GM23248 (cell line): ENCODE measurements at regions of chr6 and their contacts with region 1.

Region 1: DNA sequence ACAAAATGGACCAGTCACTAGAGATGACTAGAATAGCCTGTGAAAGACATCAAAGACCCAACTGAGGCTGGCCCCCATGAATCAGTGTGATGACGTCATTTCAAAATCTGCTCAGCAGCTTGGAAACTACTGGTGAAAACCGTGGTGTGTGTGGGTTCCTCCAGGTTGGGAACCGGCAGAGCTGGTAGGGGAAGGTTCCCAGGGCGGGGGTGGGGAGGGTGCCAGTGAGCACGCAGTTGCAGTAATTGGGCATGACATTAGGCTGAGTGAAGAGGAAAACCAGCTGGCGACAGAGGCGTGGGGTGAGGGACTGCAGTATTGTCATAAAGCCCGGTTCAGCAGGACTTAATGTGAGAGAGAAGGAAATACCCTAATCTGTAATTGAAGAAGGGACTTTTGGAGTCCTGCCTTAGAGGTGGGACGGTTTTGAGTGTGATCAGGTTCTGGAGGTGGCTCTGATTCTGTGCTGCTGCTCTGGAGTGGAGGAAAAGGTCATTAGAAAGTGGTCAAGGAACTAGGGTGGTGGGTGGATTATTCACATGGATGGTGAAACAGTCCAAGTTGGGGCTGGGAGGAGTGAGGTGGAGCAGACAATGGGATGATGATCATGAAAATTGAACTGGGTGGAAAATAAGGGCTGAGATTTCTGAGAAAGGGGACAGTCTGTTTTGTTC is 52.0 kb upstream of the MTHFD1L start:
- DNase-seq: peak; percentile 82
- H3K4me3 ChIP-seq: 0 out of 2 replicates have a peak overlapping the region, but pooled peaks have one; percentile 4
- H3K27ac ChIP-seq: peak overlapping the region; percentile 36
- H3K4me1 ChIP-seq: peaks cover 20% of the 10 kb centered on the region
- H3K27me3 ChIP-seq: no peaks in the 10 kb centered on the region

Region 2: DNA sequence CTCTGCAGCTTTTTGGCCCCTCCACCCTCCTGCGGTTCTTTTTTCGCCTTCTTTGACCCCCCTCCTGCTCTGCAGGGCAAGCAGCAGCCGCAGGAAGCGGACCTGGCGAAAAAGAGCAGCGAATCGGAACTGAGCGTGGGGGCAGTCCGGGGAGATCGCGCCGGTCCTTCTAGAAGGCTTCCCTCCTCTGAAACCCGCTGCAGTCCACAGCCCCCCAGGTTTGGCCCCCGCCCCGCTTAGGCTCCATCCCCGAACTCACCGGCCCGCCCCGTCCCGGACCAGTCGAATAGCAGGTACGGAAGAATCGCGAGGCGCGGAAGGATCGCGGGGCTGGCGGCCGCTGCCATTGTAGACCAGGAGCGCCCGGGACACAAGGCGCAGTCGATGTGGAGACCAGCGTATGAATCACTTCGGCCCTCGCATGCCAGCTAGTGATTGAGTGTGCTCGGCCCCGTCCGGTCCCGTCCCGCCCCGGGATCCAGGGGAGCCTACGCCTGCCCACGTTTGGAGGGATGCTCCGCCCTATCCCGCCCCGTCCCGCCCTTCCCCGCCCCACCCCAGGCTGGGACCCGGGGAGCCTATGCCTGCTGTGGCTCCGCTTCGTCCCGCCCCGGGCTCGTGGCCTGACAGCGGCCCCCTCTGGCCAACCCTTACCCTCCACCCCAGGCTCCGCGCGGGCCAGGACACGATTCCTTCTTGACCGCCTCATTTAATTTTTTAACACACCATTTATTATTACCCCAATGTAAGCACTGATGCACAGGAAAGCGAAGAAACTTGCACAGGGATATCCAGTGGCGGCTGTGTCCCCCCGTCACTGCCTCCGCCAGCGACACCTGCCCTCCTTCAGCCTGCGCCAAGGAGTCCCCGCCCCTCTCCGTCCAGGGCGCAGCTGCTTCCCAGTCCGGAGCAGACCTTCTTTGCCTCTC is 744.5 kb before region 1 on chr6 and contains the start of gene ULBP3:
- in situ Hi-C with region 1: loop called (anchors 25 kb)
- DNase-seq: peak; percentile 98
- H3K4me3 ChIP-seq: peak within 1 kb of the TSS; percentile 83
- H3K27ac ChIP-seq: peak within 1 kb of the TSS; percentile 10; the same call in 1 of the 2 replicates
- H3K4me1 ChIP-seq: 0 out of 2 replicates have a peak, but pooled peaks cover 7% of the 10 kb centered on the region
- H3K27me3 ChIP-seq: no peaks in the 10 kb centered on the region
- total RNA-seq, gene ULBP3: 10.1 and 12.6 TPM in 2 replicates

Region 3: GRCh38 chr6:150417899-150418826 is 395.3 kb before region 1 on chr6:
- in situ Hi-C with region 1: loop called (anchors 5 kb)
- DNase-seq: peak; percentile 93
- H3K4me3 ChIP-seq: peak overlapping the region; percentile 64
- H3K27ac ChIP-seq: peak overlapping the region; percentile 63
- H3K4me1 ChIP-seq: peaks cover 7% of the 10 kb centered on the region
- H3K27me3 ChIP-seq: no peaks in the 10 kb centered on the region; the same call in 1 of the 2 replicates

Region 4: GRCh38 chr6:151757506-151758245 is 944.2 kb after region 1 on chr6:
- in situ Hi-C with region 1: no loop called
- DNase-seq: no peak
- H3K4me3 ChIP-seq: no peak overlapping the region
- H3K27ac ChIP-seq: no peak overlapping the region
- H3K4me1 ChIP-seq: no peaks in the 10 kb centered on the region
- H3K27me3 ChIP-seq: no peaks in the 10 kb centered on the region